ENCODE measurements at regions of chr1 and their contacts with region 1.

Region 1: GRCh38 chr1:180623579-180624347 is 8.1 kb upstream of the XPR1 start:
- DNase-seq: no peak
- H3K4me3 ChIP-seq: no peak overlapping the region
- H3K27ac ChIP-seq: no peak overlapping the region
- H3K4me1 ChIP-seq: no peaks in the 10 kb centered on the region
- H3K27me3 ChIP-seq: no peaks in the 10 kb centered on the region
- CTCF ChIP-seq: peak in 1 of 2 experiments; percentile 15

Region 2: DNA sequence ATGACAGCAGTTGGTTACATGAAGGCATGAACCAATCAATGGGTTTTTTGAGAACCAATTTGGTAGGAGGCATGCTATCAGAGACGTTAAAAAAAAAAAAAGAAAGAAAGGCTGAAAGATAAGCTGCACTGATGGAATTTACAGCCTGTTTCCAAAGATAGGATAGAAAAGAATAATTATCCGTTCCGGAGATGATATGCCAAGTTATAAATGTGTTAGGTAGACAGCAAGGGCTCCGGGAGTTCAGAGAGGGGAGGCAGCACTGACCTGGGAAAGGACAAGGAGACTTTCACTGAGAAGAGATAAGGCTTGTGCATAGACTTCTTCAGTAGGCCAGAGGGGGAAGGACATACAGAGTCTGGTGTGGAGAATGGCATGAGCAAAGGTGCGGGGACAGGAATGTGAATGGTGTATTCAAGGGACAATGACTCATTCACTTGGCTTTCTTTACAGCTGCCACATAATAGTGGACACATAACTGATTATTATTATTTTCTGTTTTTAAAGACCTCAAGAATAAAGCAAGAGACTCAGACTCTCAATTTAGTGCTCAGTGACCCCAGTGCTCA is 96.6 kb before region 1 on chr1:
- intact Hi-C with region 1: loop called (anchors 10 kb)
- DNase-seq: no peak
- H3K4me3 ChIP-seq: no peak overlapping the region
- H3K27ac ChIP-seq: peak overlapping the region; percentile 65 to 66
- H3K4me1 ChIP-seq: peaks cover 0 to 50% (median 13%) of the 10 kb centered on the region in 4 donors
- H3K27me3 ChIP-seq: no peaks in the 10 kb centered on the region
- CTCF ChIP-seq: no peak